ENCODE measurements at regions of chr19 and their contacts with region 1.

Region 1: GRCh38 chr19:3075895-3076431 is 13.7 kb upstream of the TLE5 start:
- DNase-seq: peak; percentile 92
- H3K4me3 Mint-ChIP-seq: no peak overlapping the region
- H3K27ac Mint-ChIP-seq: no peak overlapping the region
- H3K4me1 Mint-ChIP-seq: no peaks in the 10 kb centered on the region
- H3K27me3 Mint-ChIP-seq: peaks cover 2% of the 10 kb centered on the region

Region 2: DNA sequence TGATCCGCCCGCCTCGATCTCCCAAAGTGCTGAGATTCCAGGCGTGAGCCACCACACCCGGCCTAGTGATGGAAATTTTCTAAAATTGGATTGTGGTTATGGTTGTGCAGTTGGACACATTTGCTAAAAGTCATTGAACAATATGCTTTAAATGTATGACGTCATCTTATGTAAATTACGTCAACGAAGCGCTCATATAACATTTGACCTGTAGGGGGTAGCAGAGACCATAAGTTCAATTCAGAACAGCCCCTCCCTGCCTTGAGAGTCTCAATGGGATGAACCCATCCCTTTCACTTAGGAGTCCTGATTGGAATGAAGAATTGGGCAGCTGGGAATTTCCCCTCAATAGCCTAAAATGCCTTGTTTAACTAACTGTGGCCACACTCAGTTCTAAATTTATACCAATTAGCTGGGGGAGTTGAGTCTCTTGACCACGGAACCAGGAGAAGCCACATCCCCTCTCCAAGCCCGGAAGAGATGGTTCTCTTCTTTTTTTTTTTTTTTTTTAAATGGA is 113.9 kb before region 1 on chr19:
- intact Hi-C with region 1: no loop called
- DNase-seq: peak; percentile 91
- H3K4me3 Mint-ChIP-seq: no peak overlapping the region
- H3K27ac Mint-ChIP-seq: no peak overlapping the region
- H3K4me1 Mint-ChIP-seq: peaks cover 4% of the 10 kb centered on the region
- H3K27me3 Mint-ChIP-seq: no peaks in the 10 kb centered on the region

Region 3: GRCh38 chr19:3163230-3163886 is 87.4 kb after region 1 on chr19:
- intact Hi-C with region 1: loop called (anchors 2 kb)
- DNase-seq: peak; percentile 91
- H3K4me3 Mint-ChIP-seq: no peak overlapping the region
- H3K27ac Mint-ChIP-seq: peak overlapping the region; percentile 56
- H3K4me1 Mint-ChIP-seq: peaks cover 33% of the 10 kb centered on the region
- H3K27me3 Mint-ChIP-seq: no peaks in the 10 kb centered on the region

Measured in activated CD4-positive, alpha-beta T cell treated with anti-CD3 and anti-CD28 coated beads, Interleukin-2, amount 10 ng/mL, durations not matched to agents 24 days and 14 days (primary cell).